Transverse colon (tissue), 4 donors: ENCODE measurements at regions of chrX and their contacts with region 1.

Region 1: GRCh38 chrX:143998261-143998660 is 114.4 kb downstream of the UBE2NL start:
- DNase-seq: no peak
- H3K4me3 ChIP-seq: no peak overlapping the region
- H3K27ac ChIP-seq: no peak overlapping the region
- H3K4me1 ChIP-seq: no peaks in the 10 kb centered on the region
- H3K27me3 ChIP-seq: no peaks in the 10 kb centered on the region
- CTCF ChIP-seq: no peak
- EP300 ChIP-seq: no peak
- POLR2A ChIP-seq: no peak

Region 2: DNA sequence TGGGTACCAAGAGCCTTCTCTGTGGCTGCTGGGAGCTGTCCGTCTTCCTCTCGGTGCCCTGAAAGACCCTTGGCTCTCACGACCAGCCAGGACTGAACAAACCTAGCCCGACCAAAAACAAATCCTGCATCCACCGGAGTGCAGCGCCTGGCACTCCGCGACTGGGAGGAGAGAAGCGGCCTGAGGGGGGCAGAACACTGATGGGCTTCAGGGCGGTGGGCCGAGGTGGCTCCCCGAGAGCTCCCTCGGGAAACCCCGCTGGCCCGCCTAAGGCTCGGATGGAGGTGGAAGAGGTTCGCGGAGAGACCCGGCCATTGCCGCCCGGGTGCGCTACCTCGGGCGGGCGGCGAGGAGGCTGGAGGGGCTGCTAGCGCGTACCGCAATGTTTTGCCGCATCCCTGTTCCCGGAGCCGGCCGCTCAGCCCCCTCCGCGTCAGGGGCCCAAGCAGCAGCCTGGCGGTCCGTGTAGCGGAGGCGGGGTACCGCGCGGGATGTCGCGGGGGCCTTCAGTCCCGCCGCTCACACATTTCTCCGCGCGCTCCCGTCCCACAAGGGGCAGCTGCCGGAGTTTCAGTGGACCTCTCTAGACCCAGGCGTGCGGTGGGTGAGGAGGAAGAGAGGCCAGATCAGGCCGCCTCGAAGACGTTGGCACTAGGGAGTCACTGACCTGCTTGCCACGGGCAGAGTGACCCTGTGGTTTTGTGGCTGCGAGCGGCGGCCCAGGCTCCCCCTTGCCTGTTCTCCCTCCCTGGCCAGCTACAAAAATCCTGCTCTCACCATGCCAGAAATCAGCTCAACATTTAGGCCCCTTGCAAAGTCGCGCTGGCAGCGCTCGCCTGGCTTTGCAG is 364.6 kb before region 1 on chrX:
- in situ Hi-C with region 1: no loop called
- intact Hi-C with region 1: no loop called
- DNase-seq: no peak
- H3K4me3 ChIP-seq: peak overlapping the region in 3 of 4 donors; percentile 7 to 48 (median 21)
- H3K27ac ChIP-seq: no peak overlapping the region
- H3K4me1 ChIP-seq: peaks cover 0 to 6% (median 0%) of the 10 kb centered on the region in 4 donors
- H3K27me3 ChIP-seq: peaks cover 30% of the 10 kb centered on the region
- CTCF ChIP-seq: no peak
- EP300 ChIP-seq: no peak
- POLR2A ChIP-seq: no peak

Region 3: GRCh38 chrX:143854006-143854405 is 144.3 kb before region 1 on chrX:
- in situ Hi-C with region 1: no loop called
- intact Hi-C with region 1: no loop called
- DNase-seq: no peak
- H3K4me3 ChIP-seq: no peak overlapping the region
- H3K27ac ChIP-seq: no peak overlapping the region
- H3K4me1 ChIP-seq: no peaks in the 10 kb centered on the region
- H3K27me3 ChIP-seq: no peaks in the 10 kb centered on the region
- CTCF ChIP-seq: no peak
- EP300 ChIP-seq: no peak
- POLR2A ChIP-seq: no peak

Region 4: GRCh38 chrX:143964549-143964948 is 33.7 kb before region 1 on chrX:
- in situ Hi-C with region 1: no loop called
- intact Hi-C with region 1: loop called (anchors 2 kb)
- DNase-seq: no peak
- H3K4me3 ChIP-seq: no peak overlapping the region
- H3K27ac ChIP-seq: no peak overlapping the region
- H3K4me1 ChIP-seq: no peaks in the 10 kb centered on the region
- H3K27me3 ChIP-seq: no peaks in the 10 kb centered on the region
- CTCF ChIP-seq: no peak
- EP300 ChIP-seq: no peak
- POLR2A ChIP-seq: no peak